Activated naive CD4-positive, alpha-beta T cell treated with anti-CD3 and anti-CD28 coated beads for 36 hours (primary cell): ENCODE measurements at regions of chr2 and their contacts with region 1.

Region 1: GRCh38 chr2:8408560-8409460 is 273.0 kb upstream of the ID2 start:
- DNase-seq: peak; percentile 83
- H3K4me3 Mint-ChIP-seq: no peak overlapping the region
- H3K27ac Mint-ChIP-seq: peak overlapping the region; percentile 64
- H3K4me1 Mint-ChIP-seq: peaks cover 26% of the 10 kb centered on the region
- H3K27me3 Mint-ChIP-seq: peaks cover 13% of the 10 kb centered on the region

Region 2: GRCh38 chr2:7427293-7428060 is 981.3 kb before region 1 on chr2:
- CTCF ChIA-PET with region 1: interaction called, 3 read pairs
- intact Hi-C with region 1: loop called (anchors 5 kb)
- DNase-seq: no peak
- H3K4me3 Mint-ChIP-seq: no peak overlapping the region
- H3K27ac Mint-ChIP-seq: no peak overlapping the region
- H3K4me1 Mint-ChIP-seq: peaks cover 31% of the 10 kb centered on the region
- H3K27me3 Mint-ChIP-seq: peaks cover 3% of the 10 kb centered on the region

Region 3: DNA sequence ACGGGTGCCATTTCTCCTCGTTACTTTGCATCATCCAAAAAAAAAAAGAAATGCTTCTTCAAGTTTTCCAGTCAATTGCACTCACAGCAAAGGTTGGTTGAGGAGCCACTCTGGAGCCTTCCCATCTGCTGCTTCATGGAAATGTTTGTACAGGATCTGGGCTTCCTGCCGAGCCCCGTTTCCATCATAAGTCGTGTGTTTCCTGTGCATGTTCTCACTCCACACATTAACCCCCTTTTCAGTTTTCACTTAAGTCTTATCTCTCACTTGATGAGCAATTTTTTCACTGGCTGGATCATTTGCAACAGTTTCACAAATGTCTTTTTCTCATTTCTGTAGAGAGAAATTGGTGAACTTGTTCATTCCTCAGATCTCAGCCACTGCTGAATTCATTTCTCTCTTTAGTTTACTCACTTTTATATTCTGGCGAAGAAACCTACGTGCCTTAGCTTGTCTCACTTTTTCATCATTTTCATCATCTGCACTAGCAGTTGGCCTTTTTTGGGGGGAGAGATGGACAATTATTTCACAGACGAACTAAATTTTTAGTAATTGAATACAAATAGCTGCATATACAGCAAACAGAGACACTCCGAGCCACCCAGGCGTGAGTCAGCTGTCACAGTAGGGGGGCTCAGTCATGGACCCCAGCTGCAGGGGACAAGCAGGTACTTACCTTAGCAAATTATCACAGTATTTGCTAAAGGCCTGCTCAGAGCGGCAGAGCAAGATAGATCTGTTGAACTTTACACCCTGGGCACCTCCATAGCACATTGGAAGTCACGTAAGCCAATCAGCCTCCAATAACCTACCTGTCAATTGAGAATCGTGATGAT is 477.8 kb before region 1 on chr2:
- CTCF ChIA-PET with region 1: no interaction called
- intact Hi-C with region 1: loop called (anchors 1 kb)
- DNase-seq: peak; percentile 45
- H3K4me3 Mint-ChIP-seq: no peak overlapping the region
- H3K27ac Mint-ChIP-seq: peak overlapping the region; percentile 74
- H3K4me1 Mint-ChIP-seq: peaks cover 19% of the 10 kb centered on the region
- H3K27me3 Mint-ChIP-seq: no peaks in the 10 kb centered on the region

Region 4: DNA sequence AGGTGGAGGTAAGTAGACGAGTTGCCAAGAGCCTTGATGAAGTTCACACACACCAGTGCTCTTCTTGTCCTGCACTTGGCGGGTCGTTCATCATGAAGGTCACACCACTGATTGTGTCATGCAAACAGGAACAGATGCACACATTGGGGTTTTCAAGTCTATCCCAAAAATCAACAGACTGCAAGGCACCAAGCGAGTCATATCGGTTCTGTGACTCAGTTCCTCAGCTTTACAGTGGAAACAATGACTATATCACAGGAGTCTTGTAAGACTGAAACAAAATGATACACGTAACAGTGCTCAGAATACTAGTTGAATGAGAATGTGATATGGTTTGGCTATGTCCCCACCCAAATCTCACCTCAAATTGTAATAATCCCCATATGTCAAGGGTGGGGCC is 253.9 kb before region 1 on chr2:
- CTCF ChIA-PET with region 1: interaction called, 3 read pairs
- intact Hi-C with region 1: loop called (anchors 1 kb)
- DNase-seq: peak; percentile 68
- H3K4me3 Mint-ChIP-seq: no peak overlapping the region
- H3K27ac Mint-ChIP-seq: peak overlapping the region; percentile 78
- H3K4me1 Mint-ChIP-seq: peaks cover 16% of the 10 kb centered on the region
- H3K27me3 Mint-ChIP-seq: no peaks in the 10 kb centered on the region

Region 5: DNA sequence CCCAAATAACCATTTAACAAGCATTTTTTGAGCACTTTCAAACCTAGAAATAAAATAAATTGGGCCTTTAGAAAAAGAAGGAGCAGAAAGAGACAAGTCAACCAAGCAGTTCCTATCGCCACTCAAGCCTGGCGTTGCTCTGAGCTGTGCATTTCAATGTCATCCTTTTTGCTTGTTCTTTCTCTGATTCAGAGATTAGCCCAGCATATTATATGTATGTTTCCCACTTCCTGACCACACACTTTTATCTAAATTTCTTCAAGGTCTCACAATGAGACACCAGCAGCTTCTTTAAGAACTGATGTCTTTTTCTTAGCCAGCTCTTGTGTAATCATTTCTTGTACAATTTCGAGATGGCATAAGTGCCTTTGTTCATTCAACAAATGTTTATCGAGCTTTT is 71.5 kb before region 1 on chr2:
- CTCF ChIA-PET with region 1: no interaction called
- intact Hi-C with region 1: loop called (anchors 1 kb)
- DNase-seq: peak; percentile 56
- H3K4me3 Mint-ChIP-seq: no peak overlapping the region
- H3K27ac Mint-ChIP-seq: peak overlapping the region; percentile 14
- H3K4me1 Mint-ChIP-seq: peaks cover 15% of the 10 kb centered on the region
- H3K27me3 Mint-ChIP-seq: no peaks in the 10 kb centered on the region

Region 6: GRCh38 chr2:8488001-8488738 is 79.4 kb after region 1 on chr2:
- CTCF ChIA-PET with region 1: no interaction called
- intact Hi-C with region 1: loop called (anchors 1 kb)
- DNase-seq: peak; percentile 86
- H3K4me3 Mint-ChIP-seq: peak overlapping the region; percentile 59
- H3K27ac Mint-ChIP-seq: peak overlapping the region; percentile 61
- H3K4me1 Mint-ChIP-seq: peaks cover 30% of the 10 kb centered on the region
- H3K27me3 Mint-ChIP-seq: no peaks in the 10 kb centered on the region